Sigmoid colon (tissue), 7 donors: ENCODE measurements at regions of chr17 and their contacts with region 1.

Region 1: GRCh38 chr17:49694847-49695683 is 12.7 kb downstream of the SLC35B1 start:
- DNase-seq: peak; percentile 74
- H3K4me3 ChIP-seq: peak overlapping the region in 2 of 4 donors; percentile 8 to 15
- H3K27ac ChIP-seq: peak overlapping the region in 3 of 4 donors; percentile 94 to 97 (median 95)
- H3K4me1 ChIP-seq: peaks cover 0 to 46% (median 39%) of the 10 kb centered on the region in 4 donors
- H3K27me3 ChIP-seq: no peaks in the 10 kb centered on the region
- CTCF ChIP-seq: peak; percentile 90 to 98 (median 94)
- EP300 ChIP-seq: no peak
- POLR2A ChIP-seq: no peak

Region 2: DNA sequence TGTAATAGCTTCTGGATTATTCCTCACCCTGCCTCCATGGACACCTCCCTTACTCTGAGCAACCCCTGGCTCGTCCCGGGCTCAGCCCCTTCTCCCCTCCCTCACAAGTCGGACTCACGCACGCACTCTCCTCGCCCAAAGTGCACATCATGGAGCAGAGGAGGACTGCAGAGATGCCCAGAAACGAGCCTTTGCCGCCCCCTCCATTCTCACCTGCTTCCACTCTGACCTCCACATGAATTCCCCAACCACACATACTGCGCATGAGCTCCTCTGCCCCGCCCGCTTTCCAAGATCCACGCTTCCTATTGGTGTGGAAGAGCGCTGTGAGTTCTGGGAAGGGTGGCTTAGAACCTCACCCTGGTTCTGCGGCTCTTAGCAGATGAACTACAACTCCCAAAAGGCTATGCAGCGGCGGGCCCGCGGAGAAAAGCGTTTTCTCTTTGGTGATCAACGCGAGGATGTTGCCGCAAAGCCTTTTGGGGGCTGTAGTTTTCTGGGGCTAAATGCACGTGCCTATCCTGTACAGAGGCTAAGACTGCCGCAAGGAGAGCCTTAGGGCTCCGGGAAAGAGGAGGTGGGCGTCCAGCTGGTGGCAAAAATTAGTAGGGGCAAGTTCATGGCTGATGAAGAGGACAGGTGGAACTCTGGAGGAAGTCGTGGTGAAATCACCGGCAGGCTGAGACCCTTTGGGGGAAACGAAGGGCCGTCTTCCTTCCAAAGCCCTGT is 280.3 kb before region 1 on chr17 and contains the start of gene PHB1:
- intact Hi-C with region 1: loop called (anchors 10 kb)
- DNase-seq: peak; percentile 98
- H3K4me3 ChIP-seq: peak within 1 kb of the TSS; percentile 63 to 94 (median 78)
- H3K27ac ChIP-seq: peak within 1 kb of the TSS; percentile 62 to 71 (median 68)
- H3K4me1 ChIP-seq: peaks cover 0 to 20% (median 16%) of the 10 kb centered on the region in 4 donors
- H3K27me3 ChIP-seq: no peaks in the 10 kb centered on the region
- CTCF ChIP-seq: no peak
- EP300 ChIP-seq: no peak
- POLR2A ChIP-seq: no peak
- total RNA-seq, gene PHB1: 70.9 to 105 (median 94.4) TPM

Region 3: DNA sequence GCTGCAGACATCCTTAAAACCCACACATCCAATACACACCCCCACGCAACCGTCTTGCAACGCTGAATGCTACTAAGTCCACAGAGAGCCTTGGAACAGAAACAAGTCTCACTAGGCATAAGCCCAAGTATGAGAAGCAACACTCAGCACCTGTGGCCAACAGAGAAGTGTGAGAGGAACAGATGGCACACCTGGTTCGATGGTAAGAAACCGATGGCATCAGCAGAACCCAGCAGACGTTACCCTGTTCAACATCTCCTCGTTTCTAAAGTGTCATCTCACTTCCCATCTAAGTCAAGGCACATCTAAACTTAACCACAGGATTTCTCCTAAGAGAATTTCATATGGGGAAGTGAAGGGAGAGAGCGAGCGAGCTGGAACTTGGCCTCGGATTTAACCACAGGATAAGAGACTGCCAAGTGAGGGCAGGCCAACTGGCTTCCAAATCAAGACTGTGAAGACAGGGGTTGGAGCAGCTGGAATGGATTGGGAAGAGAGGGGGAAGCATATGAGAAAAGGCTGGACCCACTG is 78.4 kb before region 1 on chr17:
- intact Hi-C with region 1: loop called (anchors 2 kb)
- DNase-seq: peak; percentile 88
- H3K4me3 ChIP-seq: no peak overlapping the region
- H3K27ac ChIP-seq: peak overlapping the region; percentile 67 to 89 (median 75)
- H3K4me1 ChIP-seq: peaks cover 2 to 93% (median 83%) of the 10 kb centered on the region in 4 donors
- H3K27me3 ChIP-seq: no peaks in the 10 kb centered on the region
- CTCF ChIP-seq: no peak
- EP300 ChIP-seq: no peak
- POLR2A ChIP-seq: no peak

Region 4: GRCh38 chr17:49646391-49647255 is 48.4 kb before region 1 on chr17:
- intact Hi-C with region 1: loop called (anchors 2 kb)
- DNase-seq: peak; percentile 77
- H3K4me3 ChIP-seq: peak overlapping the region; percentile 24 to 53 (median 48)
- H3K27ac ChIP-seq: peak overlapping the region; percentile 85 to 93 (median 90)
- H3K4me1 ChIP-seq: peaks cover 0 to 51% (median 38%) of the 10 kb centered on the region in 4 donors
- H3K27me3 ChIP-seq: no peaks in the 10 kb centered on the region
- CTCF ChIP-seq: no peak
- EP300 ChIP-seq: peak; percentile 40 to 97 (median 88)
- POLR2A ChIP-seq: peak; percentile 68 to 70

Region 5: GRCh38 chr17:49843774-49844350 is 148.8 kb after region 1 on chr17:
- intact Hi-C with region 1: no loop called
- DNase-seq: peak; percentile 41
- H3K4me3 ChIP-seq: no peak overlapping the region
- H3K27ac ChIP-seq: no peak overlapping the region
- H3K4me1 ChIP-seq: peaks cover 0 to 47% (median 38%) of the 10 kb centered on the region in 4 donors
- H3K27me3 ChIP-seq: no peaks in the 10 kb centered on the region
- CTCF ChIP-seq: no peak
- EP300 ChIP-seq: no peak
- POLR2A ChIP-seq: no peak